A673 (cell line): ENCODE measurements at regions of chr15 and their contacts with region 1.

Region 1: GRCh38 chr15:22872936-22873701 is 34.7 kb downstream of the NIPA2 start:
- DNase-seq: peak; percentile 85
- H3K4me3 ChIP-seq: no peak overlapping the region
- H3K27ac ChIP-seq: peak overlapping the region; percentile 56
- H3K4me1 ChIP-seq: peaks cover 3% of the 10 kb centered on the region
- H3K27me3 ChIP-seq: no peaks in the 10 kb centered on the region
- CTCF ChIP-seq: no peak

Region 2: GRCh38 chr15:22904736-22905135 is 31.6 kb after region 1 on chr15:
- CTCF ChIA-PET with region 1: no interaction called
- POLR2A ChIA-PET with region 1: no interaction called
- intact Hi-C with region 1: loop called (anchors 5 kb)
- DNase-seq: no peak
- H3K4me3 ChIP-seq: no peak overlapping the region
- H3K27ac ChIP-seq: no peak overlapping the region
- H3K4me1 ChIP-seq: no peaks in the 10 kb centered on the region
- H3K27me3 ChIP-seq: no peaks in the 10 kb centered on the region
- CTCF ChIP-seq: no peak